ENCODE measurements at regions of chr20 and their contacts with region 1.

Region 1: DNA sequence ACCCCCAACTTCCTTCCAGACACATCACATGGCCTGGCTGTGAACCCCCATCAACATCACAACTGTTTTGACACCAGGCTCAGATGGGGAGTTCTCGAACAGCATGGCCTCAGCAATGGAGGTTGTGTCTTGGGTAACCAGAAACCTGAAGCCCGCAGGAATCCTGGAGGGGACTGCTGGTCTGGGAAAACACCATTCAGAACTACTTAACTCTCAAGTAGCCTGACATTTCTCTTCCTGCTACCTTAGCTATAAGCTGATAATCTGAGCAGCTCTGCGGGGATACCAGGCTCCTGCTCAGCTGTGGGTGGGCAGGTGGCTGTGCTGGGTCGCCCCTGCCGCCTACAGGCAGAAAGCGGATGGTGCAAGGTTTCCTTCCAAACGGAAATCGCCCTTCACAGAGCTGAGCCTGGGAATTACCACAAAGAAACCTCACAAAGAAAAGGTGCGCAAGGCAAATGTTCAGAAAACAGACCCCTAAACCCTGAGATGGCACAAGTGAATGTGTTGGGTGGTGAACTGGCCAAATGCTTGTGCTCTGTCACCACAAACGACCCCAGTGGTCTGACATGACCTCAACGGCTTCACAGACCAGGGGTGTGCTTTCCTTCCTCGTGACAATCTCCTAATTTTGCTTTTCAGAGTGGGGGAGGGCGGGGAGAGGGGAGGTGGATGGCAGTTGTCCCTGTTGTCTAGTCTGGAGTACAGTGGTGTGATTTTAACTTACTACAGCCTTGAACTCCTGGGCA is 29.5 kb downstream of the SNX5 start:
- DNase-seq: peak; percentile 70
- H3K4me3 ChIP-seq: no peak overlapping the region
- H3K27ac ChIP-seq: no peak overlapping the region
- H3K4me1 ChIP-seq: peaks cover 14% of the 10 kb centered on the region
- H3K27me3 ChIP-seq: no peaks in the 10 kb centered on the region
- CTCF ChIP-seq: peak; percentile 85 to 97
- POLR2A ChIP-seq: peak; percentile 14

Region 2: GRCh38 chr20:17504898-17505635 is 434.0 kb before region 1 on chr20:
- CTCF ChIA-PET with region 1: interaction called, 46 read pairs
- POLR2A ChIA-PET with region 1: no interaction called
- dilution Hi-C with region 1: no loop called
- intact Hi-C with region 1: loop called (anchors 1 kb)
- DNase-seq: peak; percentile 72
- H3K4me3 ChIP-seq: peak overlapping the region; percentile 31 to 74 (median 58)
- H3K27ac ChIP-seq: peak overlapping the region; percentile 9
- H3K4me1 ChIP-seq: peaks cover 13% of the 10 kb centered on the region
- H3K27me3 ChIP-seq: no peaks in the 10 kb centered on the region
- CTCF ChIP-seq: peak; percentile 39 to 41
- POLR2A ChIP-seq: peak; percentile 61

Region 3: DNA sequence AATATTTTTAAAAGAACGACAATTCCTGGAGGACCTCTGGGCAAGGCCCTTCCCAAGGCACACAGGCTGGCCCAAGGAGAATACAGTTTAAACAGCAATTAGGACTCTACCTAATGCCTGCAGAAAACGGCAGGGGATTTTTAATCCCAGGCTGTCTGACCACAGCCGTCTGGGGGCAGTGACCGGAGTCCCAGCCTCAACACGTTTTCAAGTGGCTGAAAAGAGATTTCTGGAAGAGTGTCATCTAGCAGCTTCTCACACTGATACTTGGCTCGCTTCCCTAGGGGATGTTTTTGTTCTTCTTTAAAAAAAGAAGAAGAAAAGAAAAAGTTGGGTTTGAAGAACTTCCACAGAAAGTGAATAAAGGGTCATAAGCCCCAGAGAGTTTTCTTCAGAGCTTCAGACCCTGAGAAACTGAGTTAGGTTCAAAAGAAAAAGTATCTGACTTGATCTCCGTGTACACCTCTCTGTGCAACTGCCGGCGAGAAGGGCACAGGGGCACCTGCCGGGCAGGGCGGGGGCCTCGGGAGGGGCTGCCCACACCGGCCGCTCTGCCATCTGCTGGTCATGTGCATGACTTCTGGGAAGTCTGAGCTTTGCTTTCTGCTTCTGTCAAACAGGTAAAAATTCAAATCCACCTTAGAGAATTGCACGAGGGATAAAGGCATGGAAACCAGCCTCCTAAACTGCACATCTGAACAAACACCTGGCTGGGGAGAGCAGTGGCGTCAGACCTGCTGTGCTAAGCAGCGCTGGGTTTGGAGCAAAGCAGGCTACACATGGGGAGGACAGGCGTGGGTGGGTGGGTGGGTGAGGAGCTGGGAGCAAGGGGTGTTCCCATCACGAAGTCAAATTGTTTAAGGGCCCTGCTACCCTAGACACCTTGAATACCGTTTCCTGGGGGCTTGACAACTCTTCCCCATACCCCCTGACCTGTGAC is 290.0 kb before region 1 on chr20:
- CTCF ChIA-PET with region 1: interaction called, 19 read pairs
- POLR2A ChIA-PET with region 1: no interaction called
- dilution Hi-C with region 1: no loop called
- intact Hi-C with region 1: no loop called
- DNase-seq: no peak
- H3K4me3 ChIP-seq: no peak overlapping the region
- H3K27ac ChIP-seq: no peak overlapping the region
- H3K4me1 ChIP-seq: peaks cover 11% of the 10 kb centered on the region
- H3K27me3 ChIP-seq: no peaks in the 10 kb centered on the region
- CTCF ChIP-seq: peak; percentile 43 to 67
- POLR2A ChIP-seq: no peak

Region 4: DNA sequence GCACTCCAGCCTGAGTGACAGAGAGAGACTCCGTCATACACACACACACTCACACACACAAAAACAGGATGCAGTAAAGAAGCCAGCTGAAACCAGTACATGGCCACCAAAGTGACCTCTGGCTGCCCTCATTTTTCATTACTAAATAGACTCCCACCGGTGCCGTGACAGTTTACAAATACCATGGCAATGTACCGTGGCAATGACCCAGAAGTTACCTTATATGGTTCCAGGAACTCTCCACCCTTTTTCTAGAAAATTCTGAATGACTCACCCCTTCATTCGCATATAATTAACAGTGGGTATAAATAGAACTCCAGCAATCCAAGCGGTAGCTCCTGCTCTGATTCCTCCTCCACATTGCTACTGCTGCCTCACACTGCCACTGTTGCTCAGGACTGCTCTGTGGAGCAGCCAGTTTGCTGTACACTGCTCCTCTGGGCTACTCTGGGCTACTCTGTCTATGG is 28.2 kb before region 1 on chr20:
- CTCF ChIA-PET with region 1: interaction called, 16 read pairs
- POLR2A ChIA-PET with region 1: no interaction called
- dilution Hi-C with region 1: no loop called
- intact Hi-C with region 1: no loop called
- DNase-seq: peak; percentile 52
- H3K4me3 ChIP-seq: no peak overlapping the region
- H3K27ac ChIP-seq: no peak overlapping the region
- H3K4me1 ChIP-seq: no peaks in the 10 kb centered on the region
- H3K27me3 ChIP-seq: peaks cover 2 to 5% of the 10 kb centered on the region in 2 experiments
- CTCF ChIP-seq: no peak
- POLR2A ChIP-seq: no peak

Region 5: GRCh38 chr20:17995967-17996819 is 57.1 kb after region 1 on chr20:
- CTCF ChIA-PET with region 1: interaction called, 22 read pairs
- POLR2A ChIA-PET with region 1: no interaction called
- dilution Hi-C with region 1: no loop called
- intact Hi-C with region 1: loop called (anchors 2 kb)
- DNase-seq: peak; percentile 70
- H3K4me3 ChIP-seq: no peak overlapping the region
- H3K27ac ChIP-seq: no peak overlapping the region
- H3K4me1 ChIP-seq: peaks cover 16% of the 10 kb centered on the region
- H3K27me3 ChIP-seq: peaks cover 0 to 4% of the 10 kb centered on the region in 2 experiments
- CTCF ChIP-seq: peak; percentile 85 to 86
- POLR2A ChIP-seq: no peak

Measured in endothelial cell of umbilical vein (primary cell).